Naive thymus-derived CD4-positive, alpha-beta T cell (primary cell): ENCODE measurements at regions of chr2 and their contacts with region 1.

Region 1: DNA sequence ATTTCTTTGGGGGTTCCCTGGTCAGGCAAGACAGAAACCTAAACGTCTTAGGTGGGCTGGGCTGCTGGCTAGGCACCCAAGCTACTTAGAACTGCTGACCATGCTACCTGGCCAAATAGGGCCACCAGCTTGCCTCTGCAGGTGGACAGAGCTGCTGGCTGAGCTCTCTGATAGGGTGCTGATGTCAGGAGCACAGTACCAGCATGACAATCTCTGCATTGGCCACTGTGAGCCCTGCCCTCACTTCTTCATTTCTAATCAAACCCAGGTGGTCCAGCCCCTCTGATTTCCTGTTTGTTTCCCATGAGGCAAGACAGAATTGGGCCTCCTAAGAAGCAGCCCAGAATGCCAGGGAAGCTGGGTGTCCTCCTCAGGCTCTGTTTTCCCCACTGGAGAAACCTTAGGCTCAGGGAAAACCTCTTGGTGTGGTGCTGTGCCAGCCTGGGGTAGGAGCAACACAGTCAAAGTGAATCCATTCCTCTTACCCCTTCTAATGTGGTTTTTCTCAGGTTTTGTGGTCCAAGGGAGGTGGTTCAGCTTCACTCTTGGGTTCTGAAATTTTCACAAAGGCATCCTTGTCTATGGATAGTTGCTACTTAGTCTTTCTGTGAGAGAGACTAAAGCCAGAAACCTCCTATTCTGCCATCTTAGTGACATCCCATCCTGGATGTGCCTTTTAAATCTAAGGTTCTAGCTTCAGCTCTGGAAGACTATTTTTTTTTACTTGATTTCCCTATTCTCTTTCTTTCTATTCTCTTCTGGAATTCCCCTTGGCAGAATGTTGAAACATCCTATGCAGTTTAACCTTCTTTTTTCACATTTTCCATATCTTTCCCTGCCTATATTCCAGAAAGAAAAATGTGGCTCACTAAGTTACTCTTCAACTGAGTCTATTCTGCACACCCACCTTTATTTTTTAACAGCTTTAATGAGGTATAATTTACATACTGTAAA is 15.2 kb downstream of the SP100 start:
- DNase-seq: peak in 1 of 9 donors; percentile 32
- ATAC-seq: peak; percentile 65
- H3K4me3 ChIP-seq: no peak overlapping the region
- H3K4me3 Mint-ChIP-seq: peak overlapping the region; percentile 6 to 60 (median 54)
- H3K27ac ChIP-seq: peak overlapping the region; percentile 37
- H3K27ac Mint-ChIP-seq: peak overlapping the region; percentile 19 to 81 (median 45)
- H3K4me1 ChIP-seq: peaks cover 24 to 26% of the 10 kb centered on the region in 2 donors
- H3K4me1 Mint-ChIP-seq: peaks cover 44 to 68% (median 62%) of the 10 kb centered on the region in 7 donors
- H3K27me3 ChIP-seq: no peaks in the 10 kb centered on the region
- H3K27me3 Mint-ChIP-seq: no peaks in the 10 kb centered on the region

Region 2: GRCh38 chr2:230184727-230185578 is 246.3 kb before region 1 on chr2:
- CTCF ChIA-PET with region 1: no interaction called
- POLR2A ChIA-PET with region 1: no interaction called
- intact Hi-C with region 1: no loop called
- DNase-seq: no peak
- ATAC-seq: no peak
- H3K4me3 ChIP-seq: no peak overlapping the region
- H3K4me3 Mint-ChIP-seq: no peak overlapping the region
- H3K27ac ChIP-seq: no peak overlapping the region
- H3K27ac Mint-ChIP-seq: peak overlapping the region in 5 of 9 donors; percentile 19 to 74 (median 48)
- H3K4me1 ChIP-seq: no peaks in the 10 kb centered on the region
- H3K4me1 Mint-ChIP-seq: peaks cover 0 to 23% (median 6%) of the 10 kb centered on the region in 7 donors
- H3K27me3 ChIP-seq: no peaks in the 10 kb centered on the region
- H3K27me3 Mint-ChIP-seq: no peaks in the 10 kb centered on the region

Region 3: DNA sequence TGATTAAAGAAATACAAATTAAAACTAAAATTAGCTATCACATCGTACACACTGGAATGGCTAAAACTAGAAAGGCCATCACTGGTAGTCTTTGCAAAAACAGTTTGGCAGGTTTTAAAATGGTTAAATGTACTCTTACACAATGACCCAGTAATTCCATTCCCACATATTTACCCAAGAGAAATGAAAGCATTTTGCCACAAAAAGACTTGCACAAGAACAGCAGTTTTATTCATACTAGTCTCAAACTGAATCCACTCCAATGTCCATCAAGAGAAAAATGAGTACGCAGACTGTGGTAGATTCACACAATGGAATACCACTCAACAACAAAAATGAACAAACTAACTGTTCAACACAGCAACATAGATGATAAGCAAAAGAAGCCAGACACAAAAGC is 75.2 kb before region 1 on chr2:
- CTCF ChIA-PET with region 1: no interaction called
- POLR2A ChIA-PET with region 1: no interaction called
- intact Hi-C with region 1: no loop called
- DNase-seq: no peak
- ATAC-seq: no peak
- H3K4me3 ChIP-seq: no peak overlapping the region
- H3K4me3 Mint-ChIP-seq: no peak overlapping the region
- H3K27ac ChIP-seq: no peak overlapping the region
- H3K27ac Mint-ChIP-seq: peak overlapping the region in 1 of 9 donors; percentile 10
- H3K4me1 ChIP-seq: no peaks in the 10 kb centered on the region
- H3K4me1 Mint-ChIP-seq: peaks cover 14 to 55% (median 34%) of the 10 kb centered on the region in 7 donors
- H3K27me3 ChIP-seq: no peaks in the 10 kb centered on the region
- H3K27me3 Mint-ChIP-seq: no peaks in the 10 kb centered on the region

Region 4: DNA sequence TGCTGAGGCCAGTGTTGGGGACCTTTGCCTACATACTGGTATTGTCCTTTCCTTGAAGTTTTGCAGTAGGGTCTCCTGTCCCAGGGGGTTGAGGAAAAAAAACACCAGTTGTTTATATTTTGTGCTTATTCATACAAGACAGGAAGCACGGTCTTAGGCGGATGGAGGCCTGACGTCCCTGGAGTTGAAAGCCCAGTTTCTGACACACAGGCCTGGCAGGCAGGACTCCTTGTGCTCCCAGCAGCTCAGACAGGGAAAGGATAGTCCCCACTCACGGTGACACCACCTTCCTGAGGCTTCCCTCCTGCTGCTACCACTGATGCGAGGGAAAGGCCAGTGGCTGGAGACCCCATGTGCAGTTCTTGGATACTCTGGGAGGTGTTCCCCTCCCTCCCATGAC is 30.8 kb before region 1 on chr2:
- CTCF ChIA-PET with region 1: no interaction called
- POLR2A ChIA-PET with region 1: no interaction called
- intact Hi-C with region 1: loop called in 1 of 2 experiments (anchors 5 kb)
- DNase-seq: no peak
- ATAC-seq: no peak
- H3K4me3 ChIP-seq: no peak overlapping the region
- H3K4me3 Mint-ChIP-seq: no peak overlapping the region
- H3K27ac ChIP-seq: no peak overlapping the region
- H3K27ac Mint-ChIP-seq: peak overlapping the region in 2 of 9 donors; percentile 12 to 21
- H3K4me1 ChIP-seq: no peaks in the 10 kb centered on the region
- H3K4me1 Mint-ChIP-seq: peaks cover 0 to 4% (median 3%) of the 10 kb centered on the region in 7 donors
- H3K27me3 ChIP-seq: no peaks in the 10 kb centered on the region
- H3K27me3 Mint-ChIP-seq: no peaks in the 10 kb centered on the region

Region 5: DNA sequence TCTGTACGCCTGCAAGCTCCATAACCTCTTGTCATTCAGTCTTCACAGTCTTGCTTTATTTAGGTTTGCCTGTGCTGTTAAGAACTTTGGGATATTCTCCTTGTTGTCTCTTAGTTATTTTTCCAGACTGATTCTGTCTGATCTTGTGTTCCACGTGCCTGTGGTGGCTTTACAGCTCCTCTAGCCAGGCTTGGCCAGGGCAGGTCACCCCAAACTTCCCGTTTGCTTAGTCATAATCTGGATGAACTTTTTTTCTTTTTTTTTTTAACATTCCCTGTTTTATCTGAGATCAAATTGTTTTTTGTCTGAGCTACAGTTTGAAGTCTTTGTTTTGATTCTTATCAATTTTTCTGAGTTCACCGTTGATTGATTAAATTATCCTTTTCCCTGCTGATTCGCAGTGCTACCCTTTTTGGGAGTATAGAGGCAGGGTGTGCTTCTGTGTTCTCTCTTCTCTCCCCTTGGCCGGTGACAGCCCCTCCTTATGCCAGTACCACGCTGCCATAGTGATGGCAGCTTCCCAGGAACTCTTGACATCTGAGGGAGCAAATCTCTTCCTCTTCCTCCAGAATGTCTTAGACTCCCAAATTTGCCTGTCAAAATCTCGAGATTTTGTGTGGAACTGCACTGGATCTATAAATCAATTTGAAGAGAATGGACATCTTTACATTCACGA is 12.8 kb before region 1 on chr2:
- CTCF ChIA-PET with region 1: no interaction called
- POLR2A ChIA-PET with region 1: interaction called, 16 read pairs
- intact Hi-C with region 1: loop called in 1 of 2 experiments (anchors 1 kb)
- DNase-seq: no peak
- ATAC-seq: no peak
- H3K4me3 ChIP-seq: peak overlapping the region; percentile 33
- H3K4me3 Mint-ChIP-seq: peak overlapping the region; percentile 88 to 100 (median 94)
- H3K27ac ChIP-seq: peak overlapping the region; percentile 98
- H3K27ac Mint-ChIP-seq: peak overlapping the region in 8 of 9 donors; percentile 51 to 99 (median 74)
- H3K4me1 ChIP-seq: peaks cover 41 to 50% of the 10 kb centered on the region in 2 donors
- H3K4me1 Mint-ChIP-seq: peaks cover 52 to 91% (median 80%) of the 10 kb centered on the region in 7 donors
- H3K27me3 ChIP-seq: no peaks in the 10 kb centered on the region
- H3K27me3 Mint-ChIP-seq: no peaks in the 10 kb centered on the region

Region 6: DNA sequence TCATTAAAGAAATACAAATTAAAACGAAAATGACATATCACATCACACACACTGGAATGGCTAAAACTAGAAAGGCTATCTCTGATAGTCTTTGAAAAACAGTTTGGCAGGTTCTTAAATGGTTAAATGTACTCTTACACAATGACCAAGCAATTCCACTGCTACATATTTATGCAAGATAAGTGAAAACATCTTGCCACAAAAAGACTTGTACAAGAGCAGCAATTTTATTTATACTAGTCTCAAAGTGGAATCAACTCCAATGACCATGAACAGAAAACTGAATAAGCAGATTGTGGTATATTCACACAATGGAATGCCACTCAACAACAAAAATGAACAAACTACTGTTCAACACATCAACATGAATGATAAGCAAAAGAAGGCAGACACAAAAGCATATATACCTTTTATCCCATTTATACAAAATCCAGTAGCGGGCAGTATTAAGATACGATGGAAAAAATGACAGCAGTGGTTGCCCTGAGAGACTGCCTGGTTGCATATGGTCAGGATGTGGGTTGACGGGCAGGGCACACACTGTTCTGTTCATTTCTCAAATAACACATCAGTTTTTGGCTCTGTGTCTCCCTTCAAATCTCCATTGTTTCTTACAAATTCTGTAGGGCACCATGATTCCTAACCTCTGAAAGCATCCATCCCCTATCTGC is 10.1 kb after region 1 on chr2:
- CTCF ChIA-PET with region 1: no interaction called
- POLR2A ChIA-PET with region 1: no interaction called
- intact Hi-C with region 1: loop called (anchors 1 kb)
- DNase-seq: peak in 7 of 9 donors; percentile 26 to 68 (median 46)
- ATAC-seq: peak; percentile 84
- H3K4me3 ChIP-seq: peak overlapping the region; percentile 6
- H3K4me3 Mint-ChIP-seq: peak overlapping the region; percentile 32 to 78 (median 68)
- H3K27ac ChIP-seq: peak overlapping the region; percentile 46
- H3K27ac Mint-ChIP-seq: peak overlapping the region; percentile 52 to 87 (median 76)
- H3K4me1 ChIP-seq: peaks cover 30 to 37% of the 10 kb centered on the region in 2 donors
- H3K4me1 Mint-ChIP-seq: peaks cover 33 to 69% (median 55%) of the 10 kb centered on the region in 7 donors
- H3K27me3 ChIP-seq: no peaks in the 10 kb centered on the region
- H3K27me3 Mint-ChIP-seq: no peaks in the 10 kb centered on the region